PC-3 (cell line): ENCODE measurements at regions of chr12 and their contacts with region 1.

Region 1: DNA sequence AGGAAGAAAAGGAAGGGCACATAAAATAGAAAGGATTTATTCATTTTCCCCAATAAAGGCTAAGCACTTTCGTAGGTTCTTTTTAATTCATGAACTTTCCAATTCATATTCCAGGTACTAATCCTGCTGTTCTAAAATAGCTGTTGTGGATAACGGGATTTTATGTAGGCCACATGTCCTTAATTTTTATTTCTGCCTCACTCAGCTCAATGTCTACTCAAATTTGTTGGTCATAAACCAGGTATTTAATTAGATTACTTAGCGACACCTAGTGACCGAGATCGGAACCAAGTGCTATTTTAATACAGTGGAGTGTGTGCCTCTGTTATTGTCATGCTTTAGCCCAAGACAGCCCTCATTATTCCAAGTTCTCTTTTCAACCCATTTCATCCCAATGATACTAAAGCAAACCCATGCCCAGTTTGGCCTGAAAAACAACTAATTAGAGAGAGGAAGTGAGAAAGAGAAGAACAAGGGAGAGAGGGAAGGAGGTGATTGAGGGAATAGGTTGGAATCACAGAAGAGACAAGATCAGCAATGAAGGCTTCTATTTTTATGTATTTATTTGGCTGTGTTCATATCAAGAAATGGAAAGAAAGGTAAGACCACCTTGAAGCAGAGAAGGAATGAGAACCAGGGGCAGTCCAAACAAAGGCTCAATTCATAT is 45.9 kb upstream of the IFNG-AS1 start:
- DNase-seq: peak; percentile 90
- ATAC-seq: peak; percentile 68
- H3K4me3 ChIP-seq: no peak overlapping the region
- H3K27ac ChIP-seq: no peak overlapping the region
- H3K4me1 ChIP-seq: peaks cover 29% of the 10 kb centered on the region
- H3K27me3 ChIP-seq: no peaks in the 10 kb centered on the region
- CTCF ChIP-seq: peak; percentile 85

Region 2: DNA sequence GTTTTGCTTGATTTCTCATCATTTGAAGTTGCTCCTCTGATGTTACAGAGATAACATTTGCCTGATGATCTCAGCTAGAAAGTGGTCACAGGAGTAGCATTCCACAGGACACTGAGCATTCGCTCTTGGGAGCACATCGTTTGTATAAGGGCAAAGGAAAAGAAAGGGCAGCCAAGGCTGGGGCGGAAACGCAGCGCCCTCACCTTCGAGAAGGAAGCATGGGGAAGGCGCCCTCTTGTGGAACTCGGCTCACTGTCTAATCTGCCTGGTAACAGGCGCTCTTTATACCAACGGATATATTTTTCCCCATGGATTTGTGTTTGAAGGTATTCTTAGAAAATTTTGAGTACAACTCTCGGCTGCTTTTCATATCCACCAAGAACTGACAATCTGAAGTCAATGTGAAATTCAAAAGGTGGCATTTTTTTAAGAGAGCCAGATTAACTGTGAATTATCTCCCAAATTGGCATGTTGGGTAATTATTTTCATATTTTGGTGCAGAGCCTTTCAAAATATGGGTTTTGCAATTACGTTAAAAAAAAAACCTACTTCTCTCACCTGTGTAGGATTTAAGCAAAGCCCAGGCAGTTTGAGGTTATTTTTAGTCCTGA is 501.5 kb before region 1 on chr12:
- CTCF ChIA-PET with region 1: no interaction called
- POLR2A ChIA-PET with region 1: no interaction called
- intact Hi-C with region 1: loop called (anchors 1 kb)
- DNase-seq: peak; percentile 82
- ATAC-seq: peak; percentile 98
- H3K4me3 ChIP-seq: no peak overlapping the region
- H3K27ac ChIP-seq: no peak overlapping the region
- H3K4me1 ChIP-seq: peaks cover 9% of the 10 kb centered on the region; the same call in 1 of the 2 replicates
- H3K27me3 ChIP-seq: no peaks in the 10 kb centered on the region
- CTCF ChIP-seq: peak; percentile 89

Region 3: GRCh38 chr12:67710582-67710981 is 232.8 kb before region 1 on chr12:
- CTCF ChIA-PET with region 1: no interaction called
- POLR2A ChIA-PET with region 1: no interaction called
- intact Hi-C with region 1: loop called (anchors 5 kb)
- DNase-seq: peak; percentile 83
- ATAC-seq: peak; percentile 80
- H3K4me3 ChIP-seq: no peak overlapping the region
- H3K27ac ChIP-seq: peak overlapping the region; percentile 19; the same call in 1 of the 2 replicates
- H3K4me1 ChIP-seq: peaks cover 44% of the 10 kb centered on the region
- H3K27me3 ChIP-seq: no peaks in the 10 kb centered on the region
- CTCF ChIP-seq: no peak

Region 4: GRCh38 chr12:67811437-67812361 is 131.7 kb before region 1 on chr12:
- CTCF ChIA-PET with region 1: no interaction called
- POLR2A ChIA-PET with region 1: no interaction called
- intact Hi-C with region 1: loop called (anchors 5 kb)
- DNase-seq: peak; percentile 84
- ATAC-seq: peak; percentile 86
- H3K4me3 ChIP-seq: no peak overlapping the region
- H3K27ac ChIP-seq: peak overlapping the region; percentile 76
- H3K4me1 ChIP-seq: peaks cover 30% of the 10 kb centered on the region
- H3K27me3 ChIP-seq: no peaks in the 10 kb centered on the region
- CTCF ChIP-seq: no peak

Region 5: DNA sequence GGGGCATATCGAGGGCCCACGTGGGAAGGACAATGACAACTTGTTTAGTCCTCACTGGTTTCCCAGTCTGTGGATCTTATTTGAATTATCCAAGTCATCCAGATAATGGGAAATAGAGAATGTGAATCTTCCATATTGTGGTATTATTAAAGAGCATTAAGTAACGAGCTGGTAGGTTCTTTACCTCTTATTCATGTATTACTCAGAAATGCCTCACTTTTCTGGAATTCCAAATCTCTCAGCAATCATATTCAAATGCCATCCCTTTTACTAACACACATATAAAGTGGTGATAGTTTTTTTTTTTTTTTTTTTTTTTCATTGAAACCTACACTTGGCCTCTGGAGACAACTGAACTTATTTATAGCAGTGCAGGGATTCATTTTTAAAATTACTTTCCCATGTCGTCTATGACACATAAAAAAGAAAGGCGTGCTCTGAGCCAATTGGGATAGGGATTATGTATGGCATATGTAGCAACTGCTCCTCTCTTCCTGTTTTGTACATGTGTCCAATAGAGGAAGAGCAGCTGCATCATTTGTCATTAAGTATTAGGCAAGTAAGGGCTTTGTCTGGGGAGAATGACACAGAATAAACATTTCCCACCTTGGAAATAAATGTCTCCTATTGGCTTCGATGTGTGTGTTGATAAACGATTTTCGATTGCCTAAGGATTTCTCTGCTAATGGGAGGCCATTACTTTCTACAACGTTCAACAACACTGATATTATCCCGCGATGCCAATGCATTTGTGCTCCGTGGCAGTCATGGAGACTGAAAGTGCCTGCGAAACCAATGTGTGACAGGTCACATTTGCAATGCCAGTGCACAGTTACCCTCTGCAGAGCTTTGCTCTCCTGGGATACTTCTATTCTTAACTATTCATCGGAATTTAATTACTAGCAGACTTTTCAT is 32.7 kb before region 1 on chr12:
- CTCF ChIA-PET with region 1: interaction called, 4 read pairs
- POLR2A ChIA-PET with region 1: no interaction called
- intact Hi-C with region 1: loop called (anchors 1 kb)
- DNase-seq: peak; percentile 97
- ATAC-seq: peak; percentile 81
- H3K4me3 ChIP-seq: no peak overlapping the region
- H3K27ac ChIP-seq: peak overlapping the region; percentile 89
- H3K4me1 ChIP-seq: peaks cover 38% of the 10 kb centered on the region
- H3K27me3 ChIP-seq: no peaks in the 10 kb centered on the region
- CTCF ChIP-seq: no peak

Region 6: DNA sequence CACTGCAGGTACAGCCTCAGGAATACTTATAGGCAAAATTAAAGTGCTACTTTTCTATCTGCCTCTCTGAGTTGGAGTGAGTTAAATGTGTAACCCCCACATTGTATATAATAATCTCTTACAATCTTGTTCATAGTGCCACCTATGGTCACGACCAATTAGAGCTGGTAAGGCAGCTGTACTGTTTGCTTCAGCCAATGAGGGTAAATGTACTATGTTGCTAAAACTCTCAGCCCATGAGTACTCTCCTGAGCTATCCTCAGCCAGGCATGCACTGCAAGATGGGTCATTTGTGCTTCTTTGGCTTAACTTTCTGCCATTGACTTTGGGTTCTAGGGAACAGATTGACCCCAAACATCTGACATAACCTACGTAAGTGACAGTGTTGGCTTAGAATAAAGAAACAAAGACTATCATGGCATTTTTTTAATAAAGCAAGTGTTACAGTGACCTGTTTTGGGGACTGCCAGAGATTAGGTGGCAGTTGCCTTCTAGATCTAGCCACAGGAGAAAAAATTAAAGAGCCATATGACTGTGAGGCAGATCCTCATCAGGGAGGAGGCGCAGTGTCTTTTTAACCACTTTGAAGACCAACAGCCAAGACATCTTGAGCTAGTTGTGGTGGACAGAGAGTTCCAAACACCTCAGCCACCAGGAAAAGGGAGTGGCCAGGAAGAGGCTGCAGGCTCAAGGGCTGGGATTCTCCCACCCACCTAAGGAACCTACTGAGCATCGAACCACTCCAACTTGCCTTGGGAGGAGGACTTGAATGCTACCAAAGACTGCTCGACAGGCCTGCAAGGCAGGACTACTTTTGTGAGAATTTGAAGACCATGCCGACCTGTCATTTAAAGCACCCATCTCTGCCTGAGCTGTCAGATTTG is 849.8 kb after region 1 on chr12:
- CTCF ChIA-PET with region 1: no interaction called
- POLR2A ChIA-PET with region 1: no interaction called
- intact Hi-C with region 1: no loop called
- DNase-seq: peak; percentile 50
- ATAC-seq: peak; percentile 48
- H3K4me3 ChIP-seq: no peak overlapping the region
- H3K27ac ChIP-seq: no peak overlapping the region
- H3K4me1 ChIP-seq: peaks cover 10% of the 10 kb centered on the region; the same call in 1 of the 2 replicates
- H3K27me3 ChIP-seq: no peaks in the 10 kb centered on the region
- CTCF ChIP-seq: no peak